Activated CD4-positive, alpha-beta T cell treated with anti-CD3 and anti-CD28 coated beads for 36 hours (primary cell): ENCODE measurements at regions of chr6 and their contacts with region 1.

Region 1: DNA sequence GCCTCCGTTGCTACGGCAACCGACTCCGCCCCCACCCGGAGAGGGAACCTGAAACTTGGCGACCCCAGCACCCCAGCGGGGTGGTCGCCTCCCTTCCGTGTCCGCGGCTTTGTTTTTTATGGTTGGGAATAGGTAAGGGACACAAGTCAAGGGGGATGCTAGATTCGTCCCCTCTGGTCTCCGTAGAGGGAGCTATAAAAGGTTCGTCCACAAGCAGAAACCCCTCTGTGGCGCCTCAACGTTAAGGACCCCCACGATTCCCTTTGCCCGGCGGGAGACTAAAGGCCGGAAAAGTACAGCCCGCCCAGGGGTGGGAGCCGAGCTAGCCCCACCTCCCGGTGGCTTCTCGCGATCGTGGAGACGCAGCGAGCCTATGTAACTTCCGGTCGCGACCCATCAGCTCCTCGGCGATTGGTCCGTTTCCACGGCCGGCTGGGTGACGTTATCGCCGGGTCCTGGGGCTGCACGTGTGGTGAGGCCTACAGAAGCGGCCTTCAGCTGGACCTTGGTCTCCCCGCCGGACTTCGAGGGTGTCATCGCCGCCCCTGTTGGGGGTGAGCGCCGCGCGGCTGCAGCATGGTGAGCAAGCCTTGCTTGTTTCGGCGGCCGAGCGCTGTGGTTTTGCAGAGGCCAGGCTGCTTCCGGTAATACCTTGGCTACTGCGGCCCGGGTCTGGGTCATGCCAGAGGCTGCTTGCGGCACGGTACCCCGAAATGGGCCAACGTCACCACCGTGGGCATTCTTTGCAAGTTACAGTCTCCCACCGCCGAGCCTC is at the start of gene LTV1:
- DNase-seq: peak; percentile 96
- ATAC-seq: peak; percentile 99
- H3K4me3 Mint-ChIP-seq: peak within 1 kb of the TSS; percentile 93
- H3K27ac Mint-ChIP-seq: peak within 1 kb of the TSS; percentile 96
- H3K4me1 Mint-ChIP-seq: peaks cover 34% of the 10 kb centered on the region
- H3K27me3 Mint-ChIP-seq: no peaks in the 10 kb centered on the region
- total RNA-seq, gene LTV1: 34.3 to 36.3 TPM

Region 2: GRCh38 chr6:143450453-143451371 is 392.4 kb before region 1 on chr6 and contains the starts of genes ADAT2 and PEX3:
- CTCF ChIA-PET with region 1: no interaction called
- POLR2A ChIA-PET with region 1: no interaction called
- intact Hi-C with region 1: loop called (anchors 1 to 5 kb)
- DNase-seq: peak; percentile 97
- ATAC-seq: peak; percentile 95
- H3K4me3 Mint-ChIP-seq: peak within 1 kb of the TSS; percentile 88
- H3K27ac Mint-ChIP-seq: peak within 1 kb of the TSS; percentile 95
- H3K4me1 Mint-ChIP-seq: peaks cover 52% of the 10 kb centered on the region
- H3K27me3 Mint-ChIP-seq: no peaks in the 10 kb centered on the region
- total RNA-seq, gene ADAT2: 23.6 to 26.0 TPM
- total RNA-seq, gene PEX3: 31.1 to 42.2 TPM

Region 3: DNA sequence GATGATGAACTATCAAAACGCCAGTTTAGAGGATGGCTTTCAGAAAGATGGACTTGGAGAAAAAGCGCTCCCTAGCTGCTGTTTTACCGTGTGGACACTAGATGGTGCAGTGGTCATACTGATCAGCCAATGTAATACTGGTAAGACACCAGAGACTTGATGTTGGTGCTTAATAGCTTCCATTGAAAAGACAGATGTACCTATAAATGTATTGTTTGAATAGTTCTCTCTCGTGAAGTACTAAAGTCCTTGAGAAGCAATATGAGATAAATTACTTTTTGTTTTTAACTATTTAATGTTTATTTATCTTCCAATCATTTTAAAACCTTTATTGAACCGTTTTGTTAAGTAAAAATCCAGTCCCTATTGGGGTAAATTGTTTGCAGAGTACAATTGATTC is 267.6 kb before region 1 on chr6:
- CTCF ChIA-PET with region 1: interaction called, 13 read pairs
- POLR2A ChIA-PET with region 1: interaction called, 5 read pairs
- intact Hi-C with region 1: loop called (anchors 1 to 5 kb)
- DNase-seq: peak; percentile 58
- ATAC-seq: peak; percentile 93
- H3K4me3 Mint-ChIP-seq: no peak overlapping the region
- H3K27ac Mint-ChIP-seq: no peak overlapping the region
- H3K4me1 Mint-ChIP-seq: no peaks in the 10 kb centered on the region
- H3K27me3 Mint-ChIP-seq: no peaks in the 10 kb centered on the region

Region 4: DNA sequence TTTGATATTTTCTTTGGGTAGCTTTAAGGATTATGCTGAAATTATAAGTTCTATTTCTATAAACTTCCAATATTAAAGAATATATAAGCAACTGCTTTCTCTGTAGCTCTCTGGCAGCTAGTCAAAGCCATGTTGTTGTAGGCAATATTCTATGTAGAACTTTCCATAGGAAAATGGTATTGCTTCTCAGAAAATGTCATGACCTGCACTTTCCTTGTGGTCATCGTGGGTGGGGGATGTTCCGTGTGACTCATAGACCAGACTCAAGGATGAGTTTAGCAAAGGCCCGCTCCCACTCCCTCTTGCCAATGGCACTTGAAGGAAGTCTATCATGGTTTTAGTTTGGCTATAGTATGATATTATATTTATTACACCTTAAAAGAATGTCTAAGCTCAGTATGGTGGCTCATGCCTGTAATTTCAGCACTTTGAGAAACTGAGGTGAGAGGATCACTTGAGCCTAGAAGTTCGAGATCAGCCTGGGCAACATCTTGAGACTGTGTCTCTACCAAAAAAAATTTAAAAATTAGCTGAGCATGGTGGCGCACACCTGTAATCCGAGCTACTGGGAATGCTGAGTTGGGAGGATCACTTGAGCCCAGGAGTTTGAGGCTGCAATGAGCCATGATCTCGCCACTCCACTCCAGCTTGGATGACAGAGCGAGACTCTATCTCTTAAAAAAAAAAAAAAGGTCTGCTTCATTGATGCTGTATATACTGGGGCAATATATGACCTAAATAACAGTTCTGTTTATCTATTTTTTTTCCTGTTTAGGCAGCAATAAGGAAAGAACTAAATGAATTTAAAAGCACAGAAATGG is 36.6 kb before region 1 on chr6:
- CTCF ChIA-PET with region 1: no interaction called
- POLR2A ChIA-PET with region 1: interaction called, 4 read pairs
- intact Hi-C with region 1: loop called (anchors 1 to 2 kb)
- DNase-seq: peak; percentile 92
- ATAC-seq: peak; percentile 75
- H3K4me3 Mint-ChIP-seq: peak overlapping the region; percentile 32
- H3K27ac Mint-ChIP-seq: peak overlapping the region; percentile 85
- H3K4me1 Mint-ChIP-seq: peaks cover 47% of the 10 kb centered on the region
- H3K27me3 Mint-ChIP-seq: no peaks in the 10 kb centered on the region

Region 5: GRCh38 chr6:143822584-143823024 is 20.5 kb before region 1 on chr6:
- CTCF ChIA-PET with region 1: no interaction called
- POLR2A ChIA-PET with region 1: no interaction called
- intact Hi-C with region 1: no loop called
- DNase-seq: no peak
- ATAC-seq: no peak
- H3K4me3 Mint-ChIP-seq: no peak overlapping the region
- H3K27ac Mint-ChIP-seq: no peak overlapping the region
- H3K4me1 Mint-ChIP-seq: no peaks in the 10 kb centered on the region
- H3K27me3 Mint-ChIP-seq: no peaks in the 10 kb centered on the region

Region 6: DNA sequence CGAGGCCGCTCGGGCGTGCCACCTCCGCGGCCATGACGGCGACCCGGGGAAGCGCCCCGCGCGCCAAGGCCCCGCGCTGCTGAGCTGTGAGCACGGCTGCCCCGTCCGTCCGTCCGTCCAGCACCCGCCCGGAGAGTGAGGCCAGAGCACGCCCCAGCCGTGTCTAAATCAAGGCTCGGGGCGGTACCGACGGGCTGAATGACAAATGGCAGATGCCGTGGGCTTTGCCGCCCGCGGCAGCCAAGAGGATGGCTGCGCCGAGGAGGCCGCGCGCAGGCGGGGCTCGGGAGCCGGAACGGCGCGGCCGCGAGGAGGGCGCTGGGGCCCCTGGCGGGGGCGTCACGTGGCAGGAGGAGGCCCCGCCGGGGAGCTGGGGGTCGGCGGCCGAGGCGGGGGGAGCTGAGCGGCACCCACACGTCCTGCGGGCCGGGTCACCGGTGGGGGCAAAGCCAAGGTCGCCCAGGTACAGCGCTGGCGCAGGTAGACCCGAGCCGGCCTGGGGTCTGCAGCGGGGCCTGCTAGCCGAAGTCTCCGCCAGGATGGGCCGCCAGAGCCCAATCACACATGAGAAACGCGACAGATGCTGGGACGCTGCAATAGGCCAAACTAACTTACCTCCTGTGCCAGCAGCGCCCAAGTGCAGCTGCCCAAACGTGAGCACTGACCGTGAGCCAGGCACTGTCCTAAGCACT is 165.2 kb after region 1 on chr6 and contains the start of gene PLAGL1:
- CTCF ChIA-PET with region 1: interaction called, 8 read pairs
- POLR2A ChIA-PET with region 1: no interaction called
- intact Hi-C with region 1: loop called in 1 of 2 experiments (anchors 5 kb)
- DNase-seq: peak; percentile 42
- ATAC-seq: peak; percentile 79
- H3K4me3 Mint-ChIP-seq: peak within 1 kb of the TSS; percentile 65
- H3K27ac Mint-ChIP-seq: peak within 1 kb of the TSS; percentile 52
- H3K4me1 Mint-ChIP-seq: peaks cover 9% of the 10 kb centered on the region
- H3K27me3 Mint-ChIP-seq: peaks cover 18% of the 10 kb centered on the region
- total RNA-seq, gene PLAGL1: 15.9 to 16.3 TPM

Region 7: GRCh38 chr6:144095331-144096002 is 252.4 kb after region 1 on chr6 and contains the start of gene SF3B5:
- CTCF ChIA-PET with region 1: interaction called, 3 read pairs
- POLR2A ChIA-PET with region 1: no interaction called
- intact Hi-C with region 1: loop called (anchors 1 kb)
- DNase-seq: peak; percentile 98
- ATAC-seq: peak; percentile 97
- H3K4me3 Mint-ChIP-seq: peak within 1 kb of the TSS; percentile 84
- H3K27ac Mint-ChIP-seq: peak within 1 kb of the TSS; percentile 91
- H3K4me1 Mint-ChIP-seq: peaks cover 22% of the 10 kb centered on the region
- H3K27me3 Mint-ChIP-seq: no peaks in the 10 kb centered on the region
- total RNA-seq, gene SF3B5: 152 to 164 TPM